ENCODE measurements at regions of chr1 and their contacts with region 1.

Region 1: DNA sequence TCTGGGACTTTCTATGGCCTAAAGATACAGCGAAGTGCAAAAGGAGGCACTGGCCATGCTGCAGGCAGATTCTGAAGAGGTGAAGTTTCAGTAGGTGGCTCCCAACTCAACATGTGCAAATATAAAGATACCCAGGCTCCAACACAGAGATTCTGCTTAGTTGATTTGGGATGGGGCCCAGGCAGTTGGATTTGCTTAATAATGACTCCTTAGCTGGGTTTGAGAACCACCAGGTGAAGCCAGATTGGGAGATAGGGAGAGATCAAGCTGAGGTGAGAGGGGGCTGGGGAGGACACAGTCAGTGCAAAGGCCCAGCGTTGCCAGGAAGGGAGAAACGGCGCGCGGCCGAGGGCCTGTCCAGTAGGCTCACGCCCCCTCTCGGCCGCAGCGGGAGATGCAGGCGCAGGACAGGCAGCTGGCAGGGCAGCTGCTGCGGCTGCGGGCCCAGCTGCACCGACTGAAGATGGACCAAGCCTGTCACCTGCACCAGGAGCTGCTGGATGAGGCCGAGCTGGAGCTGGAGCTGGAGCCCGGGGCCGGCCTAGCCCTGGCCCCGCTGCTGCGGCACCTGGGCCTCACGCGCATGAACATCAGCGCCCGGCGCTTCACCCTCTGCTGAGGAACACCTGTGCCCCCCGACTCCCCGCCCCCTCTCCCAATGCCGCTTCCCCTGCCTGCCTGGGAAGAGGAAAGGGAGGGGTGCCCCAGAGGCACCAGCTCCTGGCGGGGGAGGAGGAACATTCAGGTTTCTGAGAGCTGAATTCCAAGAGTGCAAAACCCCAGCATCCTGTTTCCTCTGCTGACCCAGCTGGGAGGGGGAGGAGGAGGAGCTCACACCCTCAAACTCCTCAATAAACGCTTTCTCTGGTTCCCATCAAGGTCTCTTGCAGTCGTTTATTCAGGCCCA is 1.2 kb downstream of the FAM167B start:
- DNase-seq: peak; percentile 92
- ATAC-seq: peak; percentile 21
- H3K4me3 Mint-ChIP-seq: peak overlapping the region; percentile 50
- H3K27ac Mint-ChIP-seq: peak overlapping the region; percentile 99
- H3K4me1 Mint-ChIP-seq: peaks cover 41% of the 10 kb centered on the region
- H3K27me3 Mint-ChIP-seq: no peaks in the 10 kb centered on the region
- CTCF ChIP-seq: peak; percentile 96

Region 2: GRCh38 chr1:32159189-32159885 is 88.9 kb before region 1 on chr1:
- CTCF ChIA-PET with region 1: no interaction called
- POLR2A ChIA-PET with region 1: no interaction called
- intact Hi-C with region 1: no loop called
- DNase-seq: peak; percentile 33
- ATAC-seq: peak; percentile 76
- H3K4me3 Mint-ChIP-seq: no peak overlapping the region
- H3K27ac Mint-ChIP-seq: peak overlapping the region; percentile 69
- H3K4me1 Mint-ChIP-seq: peaks cover 5% of the 10 kb centered on the region
- H3K27me3 Mint-ChIP-seq: no peaks in the 10 kb centered on the region
- CTCF ChIP-seq: no peak

Region 3: GRCh38 chr1:32205401-32206370 is 42.5 kb before region 1 on chr1 and contains the start of gene IQCC:
- CTCF ChIA-PET with region 1: interaction called, 7 read pairs
- POLR2A ChIA-PET with region 1: interaction called, 13 read pairs
- intact Hi-C with region 1: no loop called
- DNase-seq: peak; percentile 91
- ATAC-seq: peak; percentile 68
- H3K4me3 Mint-ChIP-seq: peak within 1 kb of the TSS; percentile 90
- H3K27ac Mint-ChIP-seq: peak within 1 kb of the TSS; percentile 86
- H3K4me1 Mint-ChIP-seq: peaks cover 26% of the 10 kb centered on the region
- H3K27me3 Mint-ChIP-seq: no peaks in the 10 kb centered on the region
- CTCF ChIP-seq: no peak
- total RNA-seq, gene IQCC: 4.2 to 4.4 TPM

Region 4: DNA sequence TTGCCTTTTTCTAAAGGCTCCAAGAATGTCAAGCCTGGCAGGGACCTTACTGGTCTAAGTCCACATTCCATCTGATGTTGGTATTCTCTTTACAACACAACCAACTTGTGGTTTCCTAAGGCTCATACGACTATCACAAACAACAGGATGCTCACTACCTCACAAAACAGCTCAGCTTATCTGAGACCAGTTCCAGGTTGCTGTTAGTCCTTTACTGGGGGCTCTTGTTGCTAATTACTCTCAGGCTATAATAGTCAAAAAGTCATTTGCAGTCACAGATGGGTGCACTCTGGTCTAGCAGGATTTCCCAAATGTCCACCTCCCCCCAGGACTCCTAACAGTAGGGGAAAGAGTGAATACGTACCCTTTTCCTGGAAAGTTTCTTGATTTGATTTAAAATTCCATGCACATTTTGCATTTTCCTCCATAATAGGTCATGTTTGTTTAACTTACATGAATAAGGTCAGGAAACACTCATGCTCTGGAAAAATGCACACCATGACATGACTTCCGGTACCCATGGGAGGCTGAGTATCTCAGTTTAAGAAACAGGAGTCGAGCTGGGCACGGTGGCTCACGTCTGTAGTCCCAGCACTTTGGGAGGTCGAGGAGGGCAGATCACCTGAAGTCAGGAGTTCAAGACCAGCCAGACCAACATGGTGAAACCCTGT is 18.8 kb after region 1 on chr1:
- CTCF ChIA-PET with region 1: interaction called, 35 read pairs
- POLR2A ChIA-PET with region 1: interaction called, 93 read pairs
- intact Hi-C with region 1: no loop called
- DNase-seq: no peak
- ATAC-seq: peak; percentile 35
- H3K4me3 Mint-ChIP-seq: peak overlapping the region; percentile 42
- H3K27ac Mint-ChIP-seq: peak overlapping the region; percentile 98
- H3K4me1 Mint-ChIP-seq: peaks cover 55% of the 10 kb centered on the region
- H3K27me3 Mint-ChIP-seq: no peaks in the 10 kb centered on the region
- CTCF ChIP-seq: no peak

Region 5: DNA sequence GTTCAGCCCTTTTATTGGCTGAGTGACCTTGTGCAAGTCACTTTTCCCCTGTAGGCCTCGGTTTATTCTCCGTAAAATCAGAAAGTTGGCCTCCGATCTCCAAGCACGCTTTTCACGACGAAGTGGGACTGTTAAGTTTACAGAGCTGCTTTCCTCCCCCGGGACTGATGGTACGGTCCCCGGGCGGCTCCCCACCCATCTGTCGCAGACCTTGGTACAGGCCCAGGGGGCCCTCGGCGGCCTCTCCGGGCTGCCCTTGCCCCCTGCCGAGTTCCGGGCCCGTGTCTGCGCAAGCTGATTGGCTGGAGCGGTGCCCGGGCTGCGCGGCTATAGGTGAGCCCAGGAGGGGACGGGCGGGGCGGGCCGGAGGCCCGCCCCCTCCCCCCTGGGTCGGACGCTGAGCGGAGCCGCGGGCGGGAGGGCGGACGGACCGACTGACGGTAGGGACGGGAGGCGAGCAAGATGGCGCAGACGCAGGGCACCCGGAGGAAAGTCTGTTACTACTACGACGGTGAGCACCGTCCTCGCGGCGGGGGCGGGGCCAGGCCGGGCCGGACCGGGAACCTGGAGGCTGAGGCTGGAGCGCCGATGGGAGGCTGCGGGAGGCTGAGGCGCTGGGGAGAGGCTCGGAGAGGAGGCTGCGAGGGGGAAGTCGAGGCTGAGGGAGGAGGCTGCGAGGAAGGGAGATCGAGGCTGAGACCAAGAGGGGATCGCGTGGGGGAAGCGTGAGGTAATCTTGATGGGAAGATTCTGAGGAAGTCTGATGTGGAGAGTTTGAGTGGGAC is 43.7 kb after region 1 on chr1 and contains the start of gene HDAC1:
- CTCF ChIA-PET with region 1: interaction called, 21 read pairs
- POLR2A ChIA-PET with region 1: interaction called, 41 read pairs
- intact Hi-C with region 1: no loop called
- DNase-seq: peak; percentile 98
- ATAC-seq: peak; percentile 98
- H3K4me3 Mint-ChIP-seq: peak within 1 kb of the TSS; percentile 98
- H3K27ac Mint-ChIP-seq: peak within 1 kb of the TSS; percentile 97
- H3K4me1 Mint-ChIP-seq: peaks cover 41% of the 10 kb centered on the region
- H3K27me3 Mint-ChIP-seq: no peaks in the 10 kb centered on the region
- CTCF ChIP-seq: no peak
- total RNA-seq, gene HDAC1: 126 to 127 TPM

Region 6: GRCh38 chr1:32335790-32336590 is 87.8 kb after region 1 on chr1 and contains the start of gene MARCKSL1:
- CTCF ChIA-PET with region 1: interaction called, 4 read pairs
- POLR2A ChIA-PET with region 1: interaction called, 19 read pairs
- intact Hi-C with region 1: no loop called
- DNase-seq: peak; percentile 85
- ATAC-seq: peak; percentile 55
- H3K4me3 Mint-ChIP-seq: peak within 1 kb of the TSS; percentile 81
- H3K27ac Mint-ChIP-seq: peak within 1 kb of the TSS; percentile 72
- H3K4me1 Mint-ChIP-seq: peaks cover 49% of the 10 kb centered on the region
- H3K27me3 Mint-ChIP-seq: no peaks in the 10 kb centered on the region
- CTCF ChIP-seq: no peak
- total RNA-seq, gene MARCKSL1: 31.2 to 33.5 TPM

Measured in activated CD8-positive, alpha-beta T cell treated with anti-CD3 and anti-CD28 coated beads for 36 hours (primary cell).